ENCODE measurements at regions of chr16 and their contacts with region 1.

Region 1: GRCh38 chr16:12522334-12522733 is 281.4 kb downstream of the CPPED1 start:
- DNase-seq: no peak
- H3K4me3 ChIP-seq: no peak overlapping the region
- H3K27ac ChIP-seq: no peak overlapping the region
- H3K4me1 ChIP-seq: no peaks in the 10 kb centered on the region
- H3K27me3 ChIP-seq: no peaks in the 10 kb centered on the region
- CTCF ChIP-seq: no peak
- POLR2A ChIP-seq: no peak

Region 2: GRCh38 chr16:12535535-12536411 is 13.4 kb after region 1 on chr16:
- CTCF ChIA-PET with region 1: no interaction called
- POLR2A ChIA-PET with region 1: no interaction called
- dilution Hi-C with region 1: no loop called
- intact Hi-C with region 1: no loop called
- DNase-seq: no peak
- H3K4me3 ChIP-seq: no peak overlapping the region
- H3K27ac ChIP-seq: no peak overlapping the region
- H3K4me1 ChIP-seq: no peaks in the 10 kb centered on the region
- H3K27me3 ChIP-seq: no peaks in the 10 kb centered on the region
- CTCF ChIP-seq: no peak
- POLR2A ChIP-seq: no peak

Region 3: GRCh38 chr16:12583237-12583897 is 61.0 kb after region 1 on chr16:
- CTCF ChIA-PET with region 1: no interaction called
- POLR2A ChIA-PET with region 1: no interaction called
- dilution Hi-C with region 1: no loop called
- intact Hi-C with region 1: loop called (anchors 2 kb)
- DNase-seq: no peak
- H3K4me3 ChIP-seq: no peak overlapping the region
- H3K27ac ChIP-seq: no peak overlapping the region
- H3K4me1 ChIP-seq: no peaks in the 10 kb centered on the region
- H3K27me3 ChIP-seq: no peaks in the 10 kb centered on the region
- CTCF ChIP-seq: no peak
- POLR2A ChIP-seq: no peak